GM12878 (cell line): ENCODE measurements at regions of chr6 and their contacts with region 1.

Region 1: GRCh38 chr6:42547407-42548329 is 16.2 kb upstream of the UBR2 start:
- DNase-seq: no peak
- ATAC-seq: peak; percentile 100
- H3K4me3 ChIP-seq: peak overlapping the region; percentile 59
- H3K27ac ChIP-seq: no peak overlapping the region
- H3K4me1 ChIP-seq: peaks cover 10% of the 10 kb centered on the region
- H3K27me3 ChIP-seq: no peaks in the 10 kb centered on the region
- CTCF ChIP-seq: peak; percentile 99; a peak in 5 of 6 replicates
- EP300 ChIP-seq: no peak
- POLR2A ChIP-seq: no peak; the same call in 1 of the 2 replicates
- RAD21 ChIP-seq: peak; percentile 99

Region 2: GRCh38 chr6:42166444-42167141 is 381.1 kb before region 1 on chr6:
- CTCF ChIA-PET with region 1: interaction called, 4 read pairs
- POLR2A ChIA-PET with region 1: no interaction called
- RAD21 ChIA-PET with region 1: interaction called, 14 read pairs
- SMC1A ChIA-PET with region 1: interaction called, 7 read pairs
- in situ Hi-C with region 1: no loop called
- intact Hi-C with region 1: no loop called
- DNase-seq: peak; percentile 40
- ATAC-seq: peak; percentile 95
- H3K4me3 ChIP-seq: no peak overlapping the region
- H3K27ac ChIP-seq: no peak overlapping the region
- H3K4me1 ChIP-seq: no peaks in the 10 kb centered on the region
- H3K27me3 ChIP-seq: peaks cover 0 to 2% of the 10 kb centered on the region in 2 experiments; a peak in 2 of 4 replicates
- CTCF ChIP-seq: peak; percentile 95 to 98 (median 95); a peak in 5 of 6 replicates
- EP300 ChIP-seq: no peak
- POLR2A ChIP-seq: no peak
- RAD21 ChIP-seq: peak; percentile 97

Region 3: GRCh38 chr6:42260972-42261371 is 286.7 kb before region 1 on chr6:
- CTCF ChIA-PET with region 1: interaction called, 123 read pairs
- POLR2A ChIA-PET with region 1: interaction called, 3 read pairs
- RAD21 ChIA-PET with region 1: interaction called, 77 read pairs
- SMC1A ChIA-PET with region 1: interaction called, 32 read pairs
- in situ Hi-C with region 1: loop called (anchors 5 kb)
- intact Hi-C with region 1: loop called (anchors 2 kb)
- DNase-seq: no peak
- ATAC-seq: peak; percentile 91
- H3K4me3 ChIP-seq: no peak overlapping the region
- H3K27ac ChIP-seq: no peak overlapping the region
- H3K4me1 ChIP-seq: no peaks in the 10 kb centered on the region
- H3K27me3 ChIP-seq: no peaks in the 10 kb centered on the region
- CTCF ChIP-seq: peak in 2 of 3 experiments; percentile 47 to 55; a peak in 4 of 6 replicates
- EP300 ChIP-seq: no peak
- POLR2A ChIP-seq: no peak
- RAD21 ChIP-seq: peak; percentile 71

Region 4: GRCh38 chr6:42326248-42326647 is 221.4 kb before region 1 on chr6:
- CTCF ChIA-PET with region 1: interaction called, 10 read pairs
- POLR2A ChIA-PET with region 1: no interaction called
- RAD21 ChIA-PET with region 1: no interaction called
- SMC1A ChIA-PET with region 1: interaction called, 3 read pairs
- in situ Hi-C with region 1: no loop called
- intact Hi-C with region 1: no loop called
- DNase-seq: no peak
- ATAC-seq: no peak
- H3K4me3 ChIP-seq: no peak overlapping the region
- H3K27ac ChIP-seq: no peak overlapping the region
- H3K4me1 ChIP-seq: no peaks in the 10 kb centered on the region
- H3K27me3 ChIP-seq: no peaks in the 10 kb centered on the region
- CTCF ChIP-seq: no peak
- EP300 ChIP-seq: no peak
- POLR2A ChIP-seq: no peak
- RAD21 ChIP-seq: no peak

Region 5: GRCh38 chr6:42423244-42423643 is 124.4 kb before region 1 on chr6:
- CTCF ChIA-PET with region 1: interaction called, 15 read pairs
- POLR2A ChIA-PET with region 1: no interaction called
- RAD21 ChIA-PET with region 1: interaction called, 8 read pairs
- SMC1A ChIA-PET with region 1: interaction called, 11 read pairs
- in situ Hi-C with region 1: no loop called
- intact Hi-C with region 1: no loop called
- DNase-seq: peak; percentile 61
- ATAC-seq: peak; percentile 78
- H3K4me3 ChIP-seq: no peak overlapping the region
- H3K27ac ChIP-seq: no peak overlapping the region
- H3K4me1 ChIP-seq: peaks cover 52% of the 10 kb centered on the region
- H3K27me3 ChIP-seq: no peaks in the 10 kb centered on the region
- CTCF ChIP-seq: no peak
- EP300 ChIP-seq: peak; percentile 31 to 34; a peak in 1 of 4 replicates
- POLR2A ChIP-seq: no peak
- RAD21 ChIP-seq: no peak

Region 6: DNA sequence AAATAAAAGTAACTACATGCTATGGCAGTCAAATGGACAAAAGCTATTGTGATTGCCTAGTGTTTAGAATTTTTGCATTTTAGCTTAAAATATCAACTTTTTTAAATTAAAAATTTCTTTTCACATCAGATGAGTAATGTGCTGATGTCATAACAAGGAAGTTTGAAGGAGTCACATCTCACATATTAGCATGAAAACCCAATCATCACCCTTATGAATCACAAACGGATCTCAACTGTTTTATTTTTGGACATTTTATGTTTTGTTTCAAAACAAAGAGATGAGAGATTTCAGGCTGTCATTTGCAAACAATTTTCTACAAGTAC is 42.3 kb before region 1 on chr6:
- CTCF ChIA-PET with region 1: interaction called, 78 read pairs
- POLR2A ChIA-PET with region 1: interaction called, 5 read pairs
- RAD21 ChIA-PET with region 1: interaction called, 47 read pairs
- SMC1A ChIA-PET with region 1: interaction called, 60 read pairs
- in situ Hi-C with region 1: no loop called
- intact Hi-C with region 1: loop called (anchors 5 kb)
- DNase-seq: no peak
- ATAC-seq: peak; percentile 36
- H3K4me3 ChIP-seq: no peak overlapping the region
- H3K27ac ChIP-seq: peak overlapping the region; percentile 54
- H3K4me1 ChIP-seq: peaks cover 52% of the 10 kb centered on the region
- H3K27me3 ChIP-seq: no peaks in the 10 kb centered on the region
- CTCF ChIP-seq: no peak
- EP300 ChIP-seq: no peak
- POLR2A ChIP-seq: no peak
- RAD21 ChIP-seq: no peak

Region 7: DNA sequence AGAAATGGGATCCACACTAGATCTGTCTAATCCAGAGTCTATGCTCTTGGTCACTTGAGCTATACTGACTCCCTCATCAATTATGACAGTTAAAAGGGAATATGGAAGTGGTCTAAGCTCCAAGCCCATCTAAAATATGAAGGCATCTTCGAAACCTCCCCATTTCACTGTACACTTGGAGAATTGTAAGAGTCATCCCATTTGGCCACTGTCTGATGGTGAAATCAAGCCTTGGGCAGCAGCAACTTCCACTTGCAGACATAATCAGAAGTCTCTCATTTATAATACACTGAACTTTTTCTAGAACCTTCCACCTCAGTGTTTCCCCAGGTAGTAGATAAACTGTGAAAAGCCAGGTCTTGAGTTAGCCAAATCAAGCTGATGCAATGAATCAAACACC is 10.1 kb before region 1 on chr6:
- CTCF ChIA-PET with region 1: interaction called, 45 read pairs
- POLR2A ChIA-PET with region 1: no interaction called
- RAD21 ChIA-PET with region 1: interaction called, 27 read pairs
- SMC1A ChIA-PET with region 1: interaction called, 36 read pairs
- in situ Hi-C with region 1: no loop called
- intact Hi-C with region 1: no loop called
- DNase-seq: no peak
- ATAC-seq: no peak
- H3K4me3 ChIP-seq: no peak overlapping the region
- H3K27ac ChIP-seq: no peak overlapping the region
- H3K4me1 ChIP-seq: no peaks in the 10 kb centered on the region
- H3K27me3 ChIP-seq: no peaks in the 10 kb centered on the region
- CTCF ChIP-seq: no peak
- EP300 ChIP-seq: no peak
- POLR2A ChIP-seq: no peak
- RAD21 ChIP-seq: no peak

Region 8: GRCh38 chr6:42629845-42630244 is 82.2 kb after region 1 on chr6:
- CTCF ChIA-PET with region 1: no interaction called
- POLR2A ChIA-PET with region 1: no interaction called
- RAD21 ChIA-PET with region 1: no interaction called
- SMC1A ChIA-PET with region 1: no interaction called
- in situ Hi-C with region 1: no loop called
- intact Hi-C with region 1: no loop called
- DNase-seq: peak; percentile 7
- ATAC-seq: peak; percentile 74
- H3K4me3 ChIP-seq: no peak overlapping the region
- H3K27ac ChIP-seq: peak overlapping the region; percentile 58
- H3K4me1 ChIP-seq: peaks cover 4% of the 10 kb centered on the region; the same call in 1 of the 2 replicates
- H3K27me3 ChIP-seq: no peaks in the 10 kb centered on the region
- CTCF ChIP-seq: no peak
- EP300 ChIP-seq: no peak
- POLR2A ChIP-seq: no peak
- RAD21 ChIP-seq: no peak